ENCODE measurements at regions of chr14 and their contacts with region 1.

Region 1: DNA sequence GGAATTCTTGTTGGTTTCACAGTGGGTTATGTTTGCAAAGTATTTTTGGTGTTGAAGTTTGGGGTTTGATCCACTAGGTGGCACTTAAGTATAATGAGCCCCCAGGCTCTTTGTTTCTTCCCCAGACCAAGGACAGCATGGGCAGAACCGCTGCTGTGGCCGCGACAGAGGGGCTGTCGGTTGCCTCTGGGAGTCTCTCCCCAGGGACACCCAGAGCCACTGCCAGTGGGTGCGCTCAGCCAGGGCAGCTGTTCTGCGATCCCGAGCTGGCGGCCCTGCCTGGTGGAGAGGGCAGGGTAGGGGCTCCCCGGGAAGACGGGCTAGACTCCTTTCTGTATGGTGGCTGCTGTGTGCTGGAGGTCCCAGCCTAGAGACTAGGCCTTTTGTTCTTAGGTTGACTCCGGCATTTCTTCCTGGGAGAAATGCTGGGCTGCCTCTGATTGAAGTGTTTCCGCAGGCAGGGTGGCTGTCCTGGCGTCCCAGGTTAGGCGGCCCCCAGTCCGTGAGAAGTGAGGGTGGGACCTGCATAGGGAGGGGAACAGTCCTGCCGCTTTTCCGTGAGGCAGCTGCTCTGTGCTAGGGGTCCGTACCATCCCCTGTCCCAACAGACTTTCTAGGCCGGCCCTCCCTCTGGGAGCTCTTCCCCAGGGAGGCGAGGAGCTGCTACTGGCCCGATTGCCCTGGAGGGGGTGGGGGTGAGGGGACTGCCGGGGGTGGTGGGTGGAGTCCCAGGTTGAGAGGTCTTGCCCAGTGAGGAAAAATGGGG is 253.1 kb upstream of the PELI2 start:
- DNase-seq: no peak
- H3K4me3 ChIP-seq: no peak overlapping the region
- H3K4me3 Mint-ChIP-seq: peak overlapping the region in 1 of 8 donors; percentile 43
- H3K27ac ChIP-seq: no peak overlapping the region
- H3K27ac Mint-ChIP-seq: peak overlapping the region in 1 of 7 donors; percentile 71
- H3K4me1 ChIP-seq: no peaks in the 10 kb centered on the region
- H3K4me1 Mint-ChIP-seq: no peaks in the 10 kb centered on the region
- H3K27me3 ChIP-seq: no peaks in the 10 kb centered on the region
- H3K27me3 Mint-ChIP-seq: peaks cover 6% of the 10 kb centered on the region in 2 donors

Region 2: GRCh38 chr14:55832122-55832911 is 32.8 kb before region 1 on chr14:
- CTCF ChIA-PET with region 1: no interaction called
- POLR2A ChIA-PET with region 1: no interaction called
- intact Hi-C with region 1: no loop called
- DNase-seq: no peak
- H3K4me3 ChIP-seq: no peak overlapping the region
- H3K4me3 Mint-ChIP-seq: no peak overlapping the region
- H3K27ac ChIP-seq: no peak overlapping the region
- H3K27ac Mint-ChIP-seq: no peak overlapping the region
- H3K4me1 ChIP-seq: no peaks in the 10 kb centered on the region
- H3K4me1 Mint-ChIP-seq: no peaks in the 10 kb centered on the region
- H3K27me3 ChIP-seq: no peaks in the 10 kb centered on the region
- H3K27me3 Mint-ChIP-seq: peaks cover 7 to 10% of the 10 kb centered on the region in 2 donors

Region 3: DNA sequence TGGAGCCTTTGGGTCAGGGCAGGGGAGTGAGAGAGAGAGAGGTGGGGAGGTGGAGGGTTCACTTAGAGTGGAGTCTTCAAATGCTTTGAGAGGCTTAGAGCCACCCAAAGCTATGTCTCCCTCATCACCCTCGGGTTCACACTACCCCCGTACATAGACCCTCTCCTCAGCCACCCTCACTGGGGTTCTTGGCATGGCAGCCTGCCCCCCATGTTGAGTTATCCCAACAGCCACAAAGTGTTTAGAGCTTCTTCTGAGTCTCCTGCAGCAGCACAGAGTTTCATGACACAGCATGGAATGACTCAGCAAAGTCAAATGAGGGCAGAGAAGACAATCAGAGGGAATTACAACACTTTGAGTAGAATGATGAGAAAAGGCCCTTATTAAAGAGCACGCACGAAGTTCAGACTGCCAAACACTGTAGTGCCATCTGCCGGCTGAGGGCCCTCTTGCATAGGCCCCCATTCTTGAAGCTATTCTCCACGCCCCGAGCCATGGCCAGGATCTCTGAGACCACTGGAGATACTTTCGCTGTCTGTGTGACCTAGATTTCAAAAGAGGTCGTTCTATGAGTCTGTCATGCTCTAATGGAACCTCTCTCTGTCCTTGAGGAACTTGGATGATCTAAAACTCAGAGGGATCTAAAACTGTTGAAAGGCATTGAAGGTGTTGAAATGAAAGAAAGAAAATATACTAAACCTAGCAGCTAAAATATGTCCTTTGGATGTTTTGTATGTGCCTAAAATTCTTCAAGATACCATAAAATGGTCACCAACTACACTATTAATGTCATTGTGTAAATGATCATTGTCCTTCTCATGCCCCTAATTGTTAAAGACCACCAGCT is 475.0 kb after region 1 on chr14:
- CTCF ChIA-PET with region 1: interaction called, 3 read pairs
- POLR2A ChIA-PET with region 1: no interaction called
- intact Hi-C with region 1: loop called (anchors 2 kb)
- DNase-seq: peak in 4 of 5 donors; percentile 30 to 44 (median 36)
- H3K4me3 ChIP-seq: no peak overlapping the region
- H3K4me3 Mint-ChIP-seq: no peak overlapping the region
- H3K27ac ChIP-seq: no peak overlapping the region
- H3K27ac Mint-ChIP-seq: no peak overlapping the region
- H3K4me1 ChIP-seq: no peaks in the 10 kb centered on the region
- H3K4me1 Mint-ChIP-seq: no peaks in the 10 kb centered on the region
- H3K27me3 ChIP-seq: no peaks in the 10 kb centered on the region
- H3K27me3 Mint-ChIP-seq: no peaks in the 10 kb centered on the region